Posterior vena cava (tissue), 2 donors: ENCODE measurements at regions of chr7 and their contacts with region 1.

Region 1: DNA sequence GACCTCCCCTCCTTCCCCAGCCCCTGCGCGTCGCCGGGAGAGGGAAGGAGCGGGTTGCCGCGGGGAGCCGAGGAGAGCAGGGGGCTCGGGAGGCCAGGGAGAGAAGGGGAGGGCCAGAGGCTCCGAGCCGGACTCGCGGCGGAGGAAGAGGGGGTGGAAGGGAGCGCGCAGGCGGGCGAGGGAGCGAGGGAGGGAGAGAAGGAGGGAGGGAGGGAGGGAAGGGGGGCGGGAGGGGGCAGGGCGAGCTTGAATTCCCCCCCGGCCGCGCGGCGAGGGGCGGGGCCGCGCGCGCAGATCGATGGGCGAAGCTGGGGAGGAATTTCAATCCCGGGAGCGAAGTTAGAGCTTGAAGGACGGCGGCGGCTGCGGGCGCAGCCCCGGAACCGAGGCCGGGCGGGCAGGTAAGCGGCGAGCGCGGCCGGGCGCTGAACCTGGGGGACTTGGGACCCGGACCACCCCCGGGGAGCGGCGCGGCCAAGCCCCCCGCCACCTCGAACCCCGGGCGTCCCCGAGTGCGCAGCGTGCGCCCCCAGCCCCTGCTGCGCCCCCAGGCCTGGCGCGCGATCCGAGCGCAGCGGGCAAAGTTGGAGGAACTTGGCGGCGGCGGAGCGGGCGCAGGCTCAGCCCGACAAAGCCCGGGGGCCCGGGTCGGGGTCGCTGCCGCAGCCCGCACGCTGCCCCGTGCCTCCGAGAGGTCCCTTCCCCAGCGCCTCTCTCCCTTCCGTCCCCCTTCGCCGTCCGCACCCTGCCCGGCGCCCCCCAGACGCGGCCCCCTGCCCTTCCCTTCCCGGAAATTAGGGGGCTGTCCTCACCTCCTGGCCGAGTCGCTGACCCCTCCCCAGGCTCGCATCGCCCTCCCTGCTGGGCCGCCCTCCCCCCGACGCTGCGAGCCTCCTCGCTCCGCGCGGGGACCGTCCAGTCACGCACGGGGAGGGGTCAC is at the start of gene ELFN1:
- DNase-seq: peak; percentile 65
- total RNA-seq, gene ELFN1: 1.2 to 1.8 TPM

Region 2: GRCh38 chr7:2209146-2209960 is 539.1 kb after region 1 on chr7:
- intact Hi-C with region 1: loop called in 1 of 2 experiments (anchors 10 kb)
- DNase-seq: peak; percentile 88